Activated T-helper 2 cell treated with anti-CD3 and anti-CD28 coated beads, Interferon-gamma antibody, Interleukin-2, Interleukin-4, amounts not matched to agents 10 μg/mL and 5 μg/mL and 100 μg/mL, durations not matched to agents 14 hours and 24 hours and 36 hours (primary cell): ENCODE measurements at regions of chr5 and their contacts with region 1.

Region 1: GRCh38 chr5:148383564-148384379 is at the start of gene FBXO38:
- DNase-seq: peak; percentile 95
- H3K4me3 Mint-ChIP-seq: peak within 1 kb of the TSS; percentile 96
- H3K27ac Mint-ChIP-seq: peak within 1 kb of the TSS; percentile 98
- H3K4me1 Mint-ChIP-seq: peaks cover 58% of the 10 kb centered on the region
- H3K27me3 Mint-ChIP-seq: no peaks in the 10 kb centered on the region
- total RNA-seq, gene FBXO38: 55.2 and 68.9 TPM in 2 replicates

Region 2: GRCh38 chr5:146446853-146447733 is 1936.7 kb before region 1 on chr5 and contains the start of gene TCERG1:
- intact Hi-C with region 1: loop called (anchors 5 kb)
- DNase-seq: peak; percentile 98
- H3K4me3 Mint-ChIP-seq: peak within 1 kb of the TSS; percentile 100
- H3K27ac Mint-ChIP-seq: peak within 1 kb of the TSS; percentile 100
- H3K4me1 Mint-ChIP-seq: peaks cover 29% of the 10 kb centered on the region
- H3K27me3 Mint-ChIP-seq: peaks cover 10% of the 10 kb centered on the region
- total RNA-seq, gene TCERG1: 134 and 136 TPM in 2 replicates

Region 3: DNA sequence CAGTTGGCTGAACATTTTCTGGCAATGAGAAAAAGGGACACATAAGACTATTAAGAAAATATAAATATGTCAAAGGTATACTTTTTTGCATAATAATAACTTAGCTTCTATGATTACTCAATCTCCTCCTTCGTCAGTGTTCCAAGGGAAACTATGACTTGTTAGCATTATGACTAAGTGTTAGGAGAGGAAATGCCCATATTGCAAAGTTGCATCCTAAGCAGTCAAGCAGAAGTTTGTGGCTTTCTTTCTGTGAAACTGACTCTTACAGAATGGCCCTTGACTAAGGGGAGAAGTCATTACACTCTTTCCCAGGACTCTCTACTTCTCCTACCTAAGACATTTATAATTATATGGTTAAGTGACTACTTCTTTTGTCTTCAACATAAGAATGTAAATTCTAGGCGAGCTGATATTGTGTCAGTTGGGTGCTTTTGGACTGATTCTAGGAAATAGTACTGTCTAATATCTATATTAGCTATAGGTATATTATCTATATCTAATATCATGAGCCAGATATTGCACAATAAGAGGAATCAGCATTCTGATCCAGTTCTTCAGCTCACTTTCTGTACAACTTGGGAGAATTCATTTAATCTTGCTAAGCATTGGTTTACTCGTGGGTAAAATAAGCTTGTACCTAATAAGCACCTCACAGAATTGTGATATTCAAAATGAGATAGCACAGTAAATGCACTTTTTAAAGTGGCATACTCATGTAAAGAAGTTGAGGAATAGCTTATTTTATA is 197.3 kb before region 1 on chr5:
- intact Hi-C with region 1: loop called (anchors 1 kb)
- DNase-seq: no peak
- H3K4me3 Mint-ChIP-seq: no peak overlapping the region
- H3K27ac Mint-ChIP-seq: no peak overlapping the region
- H3K4me1 Mint-ChIP-seq: peaks cover 11% of the 10 kb centered on the region
- H3K27me3 Mint-ChIP-seq: peaks cover 3% of the 10 kb centered on the region

Region 4: DNA sequence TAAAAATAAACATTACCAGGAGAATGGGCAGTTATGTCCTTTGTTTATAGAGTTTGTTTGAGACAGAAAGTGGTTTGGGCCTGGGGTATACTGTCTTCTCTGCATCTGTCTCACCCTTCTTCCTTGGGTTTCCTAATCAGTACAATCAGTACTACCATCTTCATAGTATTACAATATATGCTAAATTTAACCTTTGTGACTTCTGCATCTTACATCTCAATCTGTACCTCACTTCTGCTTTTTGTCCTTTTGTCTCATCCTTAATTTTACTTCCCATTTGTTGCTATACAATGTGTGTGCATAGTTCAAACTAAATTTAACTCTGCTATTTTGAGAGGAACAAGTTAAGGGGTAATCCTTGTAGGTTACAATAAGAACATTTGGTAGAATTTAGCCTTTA is 19.6 kb after region 1 on chr5:
- intact Hi-C with region 1: loop called (anchors 2 kb)
- DNase-seq: no peak
- H3K4me3 Mint-ChIP-seq: no peak overlapping the region
- H3K27ac Mint-ChIP-seq: no peak overlapping the region
- H3K4me1 Mint-ChIP-seq: peaks cover 39% of the 10 kb centered on the region
- H3K27me3 Mint-ChIP-seq: no peaks in the 10 kb centered on the region

Region 5: DNA sequence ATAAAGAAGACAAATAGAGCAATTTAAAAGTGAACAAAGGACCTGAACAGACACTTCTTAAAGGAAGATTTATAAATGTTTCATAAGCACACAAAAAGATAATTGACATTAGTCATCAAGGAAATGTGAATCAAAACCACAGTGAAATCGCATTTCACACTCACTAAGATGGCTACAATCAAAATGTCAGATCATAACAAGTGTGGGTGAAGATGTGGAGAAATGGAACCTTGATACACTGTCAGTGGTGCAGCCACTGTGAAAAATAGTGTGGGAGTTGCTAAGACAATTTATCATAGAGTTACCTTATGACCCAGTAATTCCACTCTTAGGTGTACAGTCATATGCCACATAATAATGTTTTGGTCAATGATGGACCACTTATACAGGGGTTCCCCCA is 325.1 kb after region 1 on chr5:
- intact Hi-C with region 1: loop called (anchors 5 kb)
- DNase-seq: no peak
- H3K4me3 Mint-ChIP-seq: no peak overlapping the region
- H3K27ac Mint-ChIP-seq: peak overlapping the region; percentile 68
- H3K4me1 Mint-ChIP-seq: peaks cover 33% of the 10 kb centered on the region
- H3K27me3 Mint-ChIP-seq: peaks cover 5% of the 10 kb centered on the region

Region 6: GRCh38 chr5:148799737-148800527 is 416.2 kb after region 1 on chr5:
- intact Hi-C with region 1: loop called (anchors 5 kb)
- DNase-seq: no peak
- H3K4me3 Mint-ChIP-seq: no peak overlapping the region
- H3K27ac Mint-ChIP-seq: peak overlapping the region; percentile 78
- H3K4me1 Mint-ChIP-seq: peaks cover 29% of the 10 kb centered on the region
- H3K27me3 Mint-ChIP-seq: peaks cover 3% of the 10 kb centered on the region

Region 7: GRCh38 chr5:149357370-149358293 is 973.9 kb after region 1 on chr5 and contains the start of gene PCYOX1L:
- intact Hi-C with region 1: loop called (anchors 5 kb)
- DNase-seq: peak; percentile 97
- H3K4me3 Mint-ChIP-seq: peak within 1 kb of the TSS; percentile 94
- H3K27ac Mint-ChIP-seq: peak within 1 kb of the TSS; percentile 81
- H3K4me1 Mint-ChIP-seq: peaks cover 63% of the 10 kb centered on the region
- H3K27me3 Mint-ChIP-seq: no peaks in the 10 kb centered on the region
- total RNA-seq, gene PCYOX1L: 16.6 and 17.8 TPM in 2 replicates